Endothelial cell of umbilical vein (primary cell): ENCODE measurements at regions of chr6 and their contacts with region 1.

Region 1: GRCh38 chr6:143060354-143060805 is 309 bp upstream of the AIG1 start:
- DNase-seq: peak; percentile 82
- H3K4me3 ChIP-seq: peak overlapping the region; percentile 35 to 76 (median 67)
- H3K27ac ChIP-seq: peak overlapping the region; percentile 83
- H3K4me1 ChIP-seq: peaks cover 10% of the 10 kb centered on the region
- H3K27me3 ChIP-seq: no peaks in the 10 kb centered on the region
- CTCF ChIP-seq: peak in 1 of 2 donors; percentile 15
- POLR2A ChIP-seq: no peak

Region 2: DNA sequence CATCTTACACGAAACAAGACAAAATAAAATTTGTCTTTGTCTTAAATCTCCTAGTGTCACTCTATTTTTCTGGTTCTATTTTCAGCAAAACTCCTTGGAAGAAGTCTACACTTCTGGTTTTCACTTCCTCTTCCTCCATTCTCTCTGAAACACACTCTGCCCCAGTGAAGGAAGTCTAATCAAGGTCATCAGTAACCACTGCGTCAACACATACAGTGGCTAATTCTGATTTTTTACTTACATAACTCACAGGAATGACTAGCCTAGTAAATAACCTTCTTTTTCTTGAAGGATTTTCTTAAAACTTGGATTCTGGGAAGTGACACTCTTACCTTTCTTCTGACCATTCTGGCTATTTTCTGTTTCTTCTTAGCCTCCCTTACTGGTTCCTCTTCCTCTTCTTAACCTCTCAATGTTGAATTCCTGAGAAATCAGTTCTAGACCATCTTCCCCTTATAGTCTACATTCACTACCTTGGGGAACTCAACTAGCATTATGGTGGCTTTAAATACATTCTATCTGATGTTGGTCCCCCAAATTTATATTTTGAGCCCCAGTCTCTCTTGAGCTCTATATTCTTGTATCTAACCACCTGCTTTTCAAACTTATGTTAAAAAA is 37.8 kb after region 1 on chr6:
- CTCF ChIA-PET with region 1: no interaction called
- POLR2A ChIA-PET with region 1: no interaction called
- dilution Hi-C with region 1: no loop called
- intact Hi-C with region 1: no loop called
- DNase-seq: peak; percentile 48
- H3K4me3 ChIP-seq: no peak overlapping the region
- H3K27ac ChIP-seq: no peak overlapping the region
- H3K4me1 ChIP-seq: peaks cover 4% of the 10 kb centered on the region
- H3K27me3 ChIP-seq: no peaks in the 10 kb centered on the region
- CTCF ChIP-seq: no peak
- POLR2A ChIP-seq: no peak

Region 3: GRCh38 chr6:143195349-143195845 is 135.0 kb after region 1 on chr6:
- CTCF ChIA-PET with region 1: no interaction called
- POLR2A ChIA-PET with region 1: no interaction called
- dilution Hi-C with region 1: no loop called
- intact Hi-C with region 1: loop called (anchors 2 kb)
- DNase-seq: peak; percentile 93
- H3K4me3 ChIP-seq: no peak overlapping the region
- H3K27ac ChIP-seq: peak overlapping the region; percentile 36
- H3K4me1 ChIP-seq: peaks cover 23% of the 10 kb centered on the region
- H3K27me3 ChIP-seq: no peaks in the 10 kb centered on the region
- CTCF ChIP-seq: no peak
- POLR2A ChIP-seq: no peak